Activated B cell treated with CpG ODN at 0.5 μM for 24 hours (primary cell): ENCODE measurements at regions of chr6 and their contacts with region 1.

Region 1: DNA sequence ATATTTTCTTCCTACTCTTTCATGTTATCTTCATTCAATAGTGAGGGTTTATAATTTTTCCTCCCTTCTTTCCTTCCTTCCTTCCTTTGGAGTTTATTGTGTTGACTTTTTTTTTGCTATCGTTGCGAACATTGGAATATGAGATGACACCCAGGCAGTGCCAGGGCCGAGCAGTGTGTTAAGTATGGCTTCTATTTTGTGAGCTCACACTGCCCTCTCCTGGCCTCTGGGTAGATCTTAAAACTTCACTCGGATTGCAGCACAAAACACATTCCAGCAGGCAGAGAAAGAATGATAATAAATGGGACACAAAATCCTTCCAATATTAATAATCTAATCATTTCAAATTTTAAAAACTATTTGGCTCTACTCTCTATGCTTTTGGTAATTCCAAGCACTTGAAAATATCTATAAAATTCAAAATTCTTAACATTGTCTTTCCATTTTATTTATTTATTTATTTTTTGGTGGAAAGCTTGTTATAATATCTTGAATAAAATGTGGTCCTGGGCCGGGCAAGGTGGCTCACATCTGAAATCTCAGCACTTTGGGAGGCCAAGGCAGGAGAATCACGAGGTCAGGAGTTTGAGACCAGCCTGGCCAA is 147.4 kb upstream of the OLIG3 start:
- DNase-seq: peak; percentile 20
- ATAC-seq: peak; percentile 83
- H3K4me3 Mint-ChIP-seq: no peak overlapping the region
- H3K27ac Mint-ChIP-seq: no peak overlapping the region
- H3K4me1 Mint-ChIP-seq: peaks cover 12% of the 10 kb centered on the region
- H3K27me3 Mint-ChIP-seq: peaks cover 1% of the 10 kb centered on the region
- CTCF ChIP-seq: peak; percentile 58

Region 2: GRCh38 chr6:136582711-136583471 is 1058.7 kb before region 1 on chr6:
- CTCF ChIA-PET with region 1: no interaction called
- POLR2A ChIA-PET with region 1: no interaction called
- intact Hi-C with region 1: loop called (anchors 1 kb)
- DNase-seq: no peak
- ATAC-seq: peak; percentile 28
- H3K4me3 Mint-ChIP-seq: no peak overlapping the region
- H3K27ac Mint-ChIP-seq: no peak overlapping the region
- H3K4me1 Mint-ChIP-seq: peaks cover 5% of the 10 kb centered on the region
- H3K27me3 Mint-ChIP-seq: no peaks in the 10 kb centered on the region
- CTCF ChIP-seq: no peak

Region 3: GRCh38 chr6:136822376-136823127 is 819.0 kb before region 1 on chr6 and contains the start of gene PEX7:
- CTCF ChIA-PET with region 1: no interaction called
- POLR2A ChIA-PET with region 1: no interaction called
- intact Hi-C with region 1: loop called (anchors 10 kb)
- DNase-seq: peak; percentile 86
- ATAC-seq: peak; percentile 91
- H3K4me3 Mint-ChIP-seq: peak within 1 kb of the TSS; percentile 94
- H3K27ac Mint-ChIP-seq: peak within 1 kb of the TSS; percentile 98
- H3K4me1 Mint-ChIP-seq: peaks cover 16% of the 10 kb centered on the region
- H3K27me3 Mint-ChIP-seq: peaks cover 4% of the 10 kb centered on the region
- CTCF ChIP-seq: no peak
- total RNA-seq, gene PEX7: 5.0 and 6.8 TPM in 2 replicates

Region 4: DNA sequence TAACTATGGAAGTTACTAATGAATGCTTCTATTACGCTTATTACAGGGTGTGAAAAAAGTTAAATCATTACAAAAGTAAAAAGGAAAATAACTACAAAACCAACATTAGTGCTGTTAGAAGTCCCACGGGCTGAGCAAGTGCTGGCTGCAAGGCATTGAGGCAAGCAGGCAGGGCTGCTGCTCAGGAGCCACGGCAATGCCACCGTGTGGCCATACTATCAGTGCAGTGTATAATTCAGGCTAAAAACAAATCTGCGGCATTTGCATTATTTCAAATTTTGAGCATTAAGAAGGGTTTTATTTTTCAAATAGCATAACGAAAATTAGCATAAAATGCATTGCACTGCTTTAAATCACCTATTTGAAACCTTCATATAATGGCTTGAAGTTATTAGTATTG is 439.5 kb before region 1 on chr6:
- CTCF ChIA-PET with region 1: no interaction called
- POLR2A ChIA-PET with region 1: no interaction called
- intact Hi-C with region 1: loop called (anchors 1 kb)
- DNase-seq: no peak
- ATAC-seq: peak; percentile 89
- H3K4me3 Mint-ChIP-seq: peak overlapping the region; percentile 24
- H3K27ac Mint-ChIP-seq: peak overlapping the region; percentile 65
- H3K4me1 Mint-ChIP-seq: peaks cover 37% of the 10 kb centered on the region
- H3K27me3 Mint-ChIP-seq: no peaks in the 10 kb centered on the region
- CTCF ChIP-seq: no peak

Region 5: GRCh38 chr6:137341681-137342195 is 299.8 kb before region 1 on chr6:
- CTCF ChIA-PET with region 1: interaction called, 5 read pairs
- POLR2A ChIA-PET with region 1: no interaction called
- intact Hi-C with region 1: loop called (anchors 1 kb)
- DNase-seq: no peak
- ATAC-seq: no peak
- H3K4me3 Mint-ChIP-seq: no peak overlapping the region
- H3K27ac Mint-ChIP-seq: no peak overlapping the region
- H3K4me1 Mint-ChIP-seq: peaks cover 11% of the 10 kb centered on the region
- H3K27me3 Mint-ChIP-seq: peaks cover 5% of the 10 kb centered on the region
- CTCF ChIP-seq: no peak

Region 6: DNA sequence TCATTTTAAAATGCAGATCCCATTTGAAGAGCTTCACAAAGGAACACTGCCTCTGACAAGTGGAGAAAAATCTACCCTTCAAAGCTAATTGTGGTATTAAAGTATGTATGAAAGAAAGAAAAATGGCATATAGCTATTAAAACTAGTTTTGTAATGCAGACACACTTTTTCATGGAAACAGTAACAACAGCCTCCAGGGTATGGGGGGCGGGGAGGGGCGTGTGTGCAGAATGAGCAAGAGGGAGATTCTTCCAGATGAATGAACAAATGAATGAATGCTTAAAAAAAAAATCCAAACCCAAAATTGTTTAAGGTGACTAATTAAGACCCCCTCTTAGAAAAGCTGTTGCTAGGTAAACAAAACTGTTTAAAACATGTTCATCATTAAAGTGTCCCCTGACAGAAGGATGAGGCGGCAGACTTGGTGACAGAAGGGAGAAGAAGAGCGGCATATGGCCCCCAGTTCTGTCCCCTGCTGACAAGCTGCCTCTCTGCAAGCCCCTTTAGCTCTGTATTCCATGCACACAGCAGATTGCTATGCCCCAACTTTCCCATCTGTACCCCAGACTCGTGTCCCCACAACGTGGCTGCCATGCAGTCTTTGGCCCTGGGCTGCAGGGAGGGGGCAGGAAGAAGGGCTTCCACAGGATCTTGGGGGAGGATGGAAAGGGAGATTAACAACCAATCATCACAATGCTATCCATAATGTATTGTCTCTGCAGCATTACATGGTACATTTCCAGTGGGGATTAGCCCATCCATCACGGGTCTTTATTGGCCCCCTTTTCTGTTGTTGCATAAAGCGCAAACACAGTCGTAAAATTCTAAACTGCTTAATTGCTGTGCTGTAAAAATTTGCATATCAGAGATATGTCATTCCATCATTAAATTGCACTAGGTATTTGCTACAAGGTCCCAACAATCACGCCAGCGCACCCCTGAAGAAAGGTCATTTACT is 39.0 kb before region 1 on chr6:
- CTCF ChIA-PET with region 1: no interaction called
- POLR2A ChIA-PET with region 1: no interaction called
- intact Hi-C with region 1: no loop called
- DNase-seq: no peak
- ATAC-seq: no peak
- H3K4me3 Mint-ChIP-seq: no peak overlapping the region
- H3K27ac Mint-ChIP-seq: no peak overlapping the region
- H3K4me1 Mint-ChIP-seq: no peaks in the 10 kb centered on the region
- H3K27me3 Mint-ChIP-seq: peaks cover 20% of the 10 kb centered on the region
- CTCF ChIP-seq: no peak

Region 7: GRCh38 chr6:138109042-138109997 is 467.7 kb after region 1 on chr6:
- CTCF ChIA-PET with region 1: no interaction called
- POLR2A ChIA-PET with region 1: no interaction called
- intact Hi-C with region 1: loop called (anchors 5 kb)
- DNase-seq: peak; percentile 50
- ATAC-seq: peak; percentile 73
- H3K4me3 Mint-ChIP-seq: peak overlapping the region; percentile 39
- H3K27ac Mint-ChIP-seq: no peak overlapping the region
- H3K4me1 Mint-ChIP-seq: peaks cover 17% of the 10 kb centered on the region
- H3K27me3 Mint-ChIP-seq: peaks cover 28% of the 10 kb centered on the region
- CTCF ChIP-seq: peak; percentile 93